Activated CD8-positive, alpha-beta T cell treated with anti-CD3 and anti-CD28 coated beads, Interleukin-2, amount 10 ng/mL, durations not matched to agents 7 days and 5 days (primary cell): ENCODE measurements at regions of chr21 and their contacts with region 1.

Region 1: DNA sequence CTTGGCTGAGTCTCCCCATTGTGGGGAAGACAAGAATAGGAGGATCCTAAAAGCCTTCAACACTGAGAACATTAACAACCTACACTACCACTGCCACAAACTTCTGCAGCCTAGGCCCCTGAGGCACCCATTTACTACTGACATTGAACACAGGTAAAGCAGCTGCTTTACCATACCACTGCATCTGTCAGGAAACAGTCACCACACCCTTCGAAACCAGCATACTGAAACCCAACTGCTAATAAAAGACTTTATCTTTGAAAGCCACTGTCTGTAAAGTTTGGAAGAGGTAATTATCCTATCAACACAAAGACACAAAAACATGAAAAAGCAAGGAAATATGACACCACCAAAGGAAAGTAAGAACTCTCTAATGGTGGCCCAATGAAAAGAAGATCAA is 7.4 kb downstream of the IFNAR1 start:
- DNase-seq: peak; percentile 39
- ATAC-seq: peak; percentile 72
- H3K4me3 Mint-ChIP-seq: no peak overlapping the region
- H3K27ac Mint-ChIP-seq: peak overlapping the region; percentile 54
- H3K4me1 Mint-ChIP-seq: peaks cover 51% of the 10 kb centered on the region
- H3K27me3 Mint-ChIP-seq: no peaks in the 10 kb centered on the region

Region 2: DNA sequence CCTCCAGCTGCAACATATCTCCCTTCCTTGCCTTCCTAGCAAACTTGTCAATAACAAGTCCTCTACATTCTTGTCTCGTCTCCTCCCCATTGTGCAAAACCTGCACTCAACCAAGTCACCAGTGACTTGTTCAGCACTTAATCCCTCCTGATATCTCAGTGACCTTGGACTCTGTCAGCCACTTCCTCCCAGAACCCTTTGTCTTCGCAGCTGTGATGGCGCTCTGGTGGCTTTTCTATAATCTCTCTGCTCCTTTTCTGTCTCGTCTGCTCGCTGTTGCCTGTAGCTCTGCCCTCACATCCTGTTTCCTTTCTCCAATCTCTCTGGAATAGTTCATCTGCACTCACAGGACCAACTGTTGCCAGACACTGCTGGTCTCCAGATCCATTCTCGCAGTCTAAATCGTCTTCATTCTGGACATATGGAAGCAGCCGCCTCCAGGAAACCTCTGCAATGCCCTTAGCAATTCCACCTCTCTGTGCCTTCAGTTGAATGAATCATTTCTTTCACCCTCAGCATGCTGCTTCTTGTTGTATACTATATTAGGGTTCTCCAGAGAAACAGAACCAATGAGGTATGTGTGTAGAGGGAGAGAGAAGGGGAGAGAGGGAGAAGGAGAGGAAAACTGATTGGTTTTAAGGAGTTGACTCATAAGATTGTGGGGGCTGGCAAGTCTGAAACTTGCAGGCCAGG is 119.8 kb before region 1 on chr21:
- CTCF ChIA-PET with region 1: no interaction called
- POLR2A ChIA-PET with region 1: no interaction called
- DNase-seq: peak; percentile 45
- ATAC-seq: peak; percentile 29
- H3K4me3 Mint-ChIP-seq: peak overlapping the region; percentile 35
- H3K27ac Mint-ChIP-seq: peak overlapping the region; percentile 86
- H3K4me1 Mint-ChIP-seq: peaks cover 73% of the 10 kb centered on the region
- H3K27me3 Mint-ChIP-seq: no peaks in the 10 kb centered on the region

Region 3: DNA sequence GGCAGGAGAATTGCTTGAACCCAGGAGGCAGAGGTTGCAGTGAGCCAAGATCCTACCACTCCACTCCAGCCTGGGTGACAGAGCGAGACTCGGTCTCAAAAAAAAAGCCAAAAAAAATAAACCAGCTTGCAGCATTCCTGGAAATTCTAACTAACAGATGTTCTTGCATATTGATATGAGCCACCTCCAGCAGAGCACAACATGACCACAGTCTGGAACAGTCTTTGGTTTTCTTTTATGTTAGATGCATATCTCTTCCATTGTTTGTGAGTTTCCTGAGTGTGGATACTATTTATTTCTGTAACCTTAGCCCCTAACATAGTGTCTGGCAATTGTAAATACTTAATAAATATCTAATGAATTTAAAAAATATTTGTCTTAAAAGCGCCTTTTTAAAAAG is 16.6 kb after region 1 on chr21:
- CTCF ChIA-PET with region 1: interaction called, 15 read pairs
- POLR2A ChIA-PET with region 1: no interaction called
- DNase-seq: no peak
- ATAC-seq: no peak
- H3K4me3 Mint-ChIP-seq: no peak overlapping the region
- H3K27ac Mint-ChIP-seq: no peak overlapping the region
- H3K4me1 Mint-ChIP-seq: peaks cover 4% of the 10 kb centered on the region
- H3K27me3 Mint-ChIP-seq: no peaks in the 10 kb centered on the region